ENCODE measurements at regions of chr7 and their contacts with region 1.

Region 1: DNA sequence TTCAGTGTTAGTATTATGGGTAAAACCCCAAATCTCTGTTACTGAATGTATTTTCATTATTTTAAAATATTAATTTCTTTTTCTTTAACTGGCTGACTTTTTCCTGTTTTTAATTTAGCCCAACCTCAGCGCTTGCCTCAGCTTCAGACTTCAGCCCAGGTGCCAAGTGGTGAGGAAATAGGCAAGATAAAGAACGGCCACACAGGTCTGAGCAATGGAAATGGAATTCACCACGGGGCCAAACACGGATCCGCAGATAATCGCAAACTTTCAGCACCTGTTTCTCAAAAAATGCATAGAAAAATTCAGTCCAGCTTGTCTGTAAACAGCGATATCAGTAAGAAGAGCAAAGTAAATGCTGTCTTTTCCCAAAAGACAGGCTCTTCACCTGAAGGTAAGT is 57.5 kb downstream of the MDFIC start:
- DNase-seq: peak; percentile 40
- ATAC-seq: peak; percentile 95

Region 2: DNA sequence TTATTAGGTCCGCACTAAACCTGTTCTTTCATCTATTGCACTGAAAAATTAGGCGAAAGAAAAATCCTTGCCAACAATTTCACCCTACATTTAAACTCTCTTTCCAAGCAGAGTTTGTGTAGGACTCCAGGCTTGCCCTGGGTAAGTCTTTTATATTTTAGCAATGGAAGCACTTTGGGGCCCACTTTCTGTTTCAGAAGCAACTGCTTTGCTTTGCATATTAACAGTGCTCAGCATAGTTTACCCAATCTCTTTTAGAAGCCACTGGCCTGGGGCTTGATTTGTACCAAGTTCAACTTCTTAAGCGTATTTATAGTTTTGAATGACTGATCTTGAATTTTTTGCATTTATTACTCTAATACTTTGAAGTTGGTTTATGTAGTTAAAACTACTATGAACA is 136.3 kb before region 1 on chr7:
- intact Hi-C with region 1: no loop called
- DNase-seq: no peak
- ATAC-seq: no peak

Region 3: DNA sequence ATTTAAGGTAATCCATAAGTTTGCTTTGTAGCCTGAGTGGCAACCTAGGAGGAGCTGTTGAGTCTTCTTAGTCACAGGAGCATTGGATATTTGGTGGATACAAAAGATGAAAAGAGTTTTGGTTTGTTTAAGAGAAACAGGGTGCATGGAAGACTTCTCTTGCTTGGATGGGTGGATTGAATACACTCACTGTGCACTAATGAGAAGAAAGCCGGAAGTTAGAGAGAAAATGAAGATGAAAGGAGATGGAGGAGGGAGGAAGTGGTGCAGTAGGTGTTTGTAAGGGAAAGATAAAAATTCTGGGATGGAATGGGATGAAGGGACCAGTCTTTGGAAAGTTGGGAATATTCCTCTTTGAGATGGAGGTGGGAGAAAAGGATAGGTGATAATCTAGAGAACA is 49.8 kb before region 1 on chr7:
- intact Hi-C with region 1: loop called (anchors 5 kb)
- DNase-seq: no peak
- ATAC-seq: no peak

Measured in Right ventricle myocardium superior (tissue), 1 donor.